ENCODE measurements at regions of chr5 and their contacts with region 1.

Region 1: GRCh38 chr5:177425801-177426565 is 493 bp upstream of the GRK6 start:
- DNase-seq: peak; percentile 89 to 100 (median 100)
- ATAC-seq: peak; percentile 89
- H3K4me3 ChIP-seq: peak overlapping the region; percentile 67
- H3K4me3 Mint-ChIP-seq: peak overlapping the region; percentile 87 to 96 (median 90)
- H3K27ac ChIP-seq: peak overlapping the region; percentile 82
- H3K27ac Mint-ChIP-seq: peak overlapping the region; percentile 92 to 98 (median 96)
- H3K4me1 ChIP-seq: peaks cover 27 to 36% of the 10 kb centered on the region in 2 donors
- H3K4me1 Mint-ChIP-seq: peaks cover 33 to 54% (median 38%) of the 10 kb centered on the region in 7 donors
- H3K27me3 ChIP-seq: no peaks in the 10 kb centered on the region
- H3K27me3 Mint-ChIP-seq: peaks cover 0 to 3% (median 0%) of the 10 kb centered on the region in 5 donors

Region 2: GRCh38 chr5:176965633-176966032 is 460.4 kb before region 1 on chr5:
- CTCF ChIA-PET with region 1: no interaction called
- POLR2A ChIA-PET with region 1: no interaction called
- intact Hi-C with region 1: no loop called
- DNase-seq: no peak
- ATAC-seq: no peak
- H3K4me3 ChIP-seq: no peak overlapping the region
- H3K4me3 Mint-ChIP-seq: no peak overlapping the region
- H3K27ac ChIP-seq: no peak overlapping the region
- H3K27ac Mint-ChIP-seq: peak overlapping the region in 1 of 9 donors; percentile 20
- H3K4me1 ChIP-seq: no peaks in the 10 kb centered on the region
- H3K4me1 Mint-ChIP-seq: peaks cover 0 to 4% (median 1%) of the 10 kb centered on the region in 7 donors
- H3K27me3 ChIP-seq: no peaks in the 10 kb centered on the region
- H3K27me3 Mint-ChIP-seq: no peaks in the 10 kb centered on the region

Region 3: GRCh38 chr5:177311723-177312648 is 114.0 kb before region 1 on chr5 and contains the start of gene MXD3:
- CTCF ChIA-PET with region 1: no interaction called
- POLR2A ChIA-PET with region 1: no interaction called
- intact Hi-C with region 1: loop called in 1 of 2 experiments (anchors 1 kb)
- DNase-seq: peak; percentile 87 to 97 (median 92)
- ATAC-seq: peak; percentile 95
- H3K4me3 ChIP-seq: peak within 1 kb of the TSS; percentile 77
- H3K4me3 Mint-ChIP-seq: peak within 1 kb of the TSS; percentile 78 to 93 (median 84)
- H3K27ac ChIP-seq: peak within 1 kb of the TSS; percentile 51
- H3K27ac Mint-ChIP-seq: peak within 1 kb of the TSS in 6 of 9 donors; percentile 42 to 92 (median 59)
- H3K4me1 ChIP-seq: peaks cover 21 to 22% of the 10 kb centered on the region in 2 donors
- H3K4me1 Mint-ChIP-seq: peaks cover 11 to 49% (median 32%) of the 10 kb centered on the region in 7 donors
- H3K27me3 ChIP-seq: no peaks in the 10 kb centered on the region
- H3K27me3 Mint-ChIP-seq: peaks cover 0 to 5% (median 0%) of the 10 kb centered on the region in 5 donors
- total RNA-seq, gene MXD3: 8.8 to 39.8 (median 18.3) TPM

Region 4: DNA sequence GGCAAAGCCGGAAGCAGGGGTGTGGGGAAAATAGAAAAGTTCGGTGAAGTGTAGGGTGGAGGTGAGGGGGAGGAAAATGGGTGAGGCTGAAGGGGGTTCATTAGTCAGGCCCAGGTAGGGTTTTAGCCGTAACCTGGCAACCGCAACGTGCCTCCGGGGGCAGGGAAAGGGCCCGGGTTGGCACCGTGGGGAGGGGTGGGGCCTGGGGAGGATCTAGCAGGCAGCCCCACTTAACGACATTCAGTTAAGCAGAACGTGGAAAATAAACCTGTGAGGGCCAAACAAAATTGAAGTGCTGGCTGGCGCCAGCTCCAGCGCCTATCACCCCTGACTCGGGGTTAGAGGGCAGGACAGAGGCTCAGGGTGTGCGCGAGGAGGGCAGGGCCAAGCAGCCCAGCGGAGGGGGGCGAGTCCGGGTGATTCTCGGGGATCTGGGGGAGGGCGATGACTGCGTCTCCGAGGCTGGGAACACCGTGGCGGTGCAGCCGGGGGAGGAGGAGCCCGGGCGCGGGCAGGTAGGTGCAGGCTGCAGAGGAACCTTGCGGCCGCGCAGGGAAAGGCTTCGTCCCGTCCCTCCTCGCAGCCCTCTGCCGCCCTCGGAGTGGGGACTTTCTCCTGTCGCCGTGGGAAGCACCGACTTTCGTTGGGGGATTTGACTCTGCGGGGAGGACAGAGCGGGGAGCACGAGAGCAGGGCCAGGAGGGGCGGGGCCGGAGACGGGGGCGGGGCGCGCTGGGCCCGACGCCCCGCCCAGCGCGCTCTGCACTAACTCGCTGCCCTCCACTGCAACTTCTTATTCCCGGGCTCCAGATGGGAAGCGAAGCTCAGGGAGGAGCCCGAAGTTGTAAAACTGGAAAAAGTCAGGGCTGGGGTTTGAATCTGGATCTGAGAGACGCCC is 63.1 kb before region 1 on chr5:
- CTCF ChIA-PET with region 1: no interaction called
- POLR2A ChIA-PET with region 1: interaction called, 3 read pairs
- intact Hi-C with region 1: loop called (anchors 2 kb)
- DNase-seq: peak; percentile 32 to 79 (median 55)
- ATAC-seq: peak; percentile 80
- H3K4me3 ChIP-seq: peak overlapping the region; percentile 61
- H3K4me3 Mint-ChIP-seq: peak overlapping the region; percentile 83 to 97 (median 90)
- H3K27ac ChIP-seq: peak overlapping the region; percentile 88
- H3K27ac Mint-ChIP-seq: peak overlapping the region; percentile 82 to 94 (median 91)
- H3K4me1 ChIP-seq: peaks cover 53 to 61% of the 10 kb centered on the region in 2 donors
- H3K4me1 Mint-ChIP-seq: peaks cover 42 to 78% (median 64%) of the 10 kb centered on the region in 7 donors
- H3K27me3 ChIP-seq: no peaks in the 10 kb centered on the region
- H3K27me3 Mint-ChIP-seq: no peaks in the 10 kb centered on the region

Region 5: DNA sequence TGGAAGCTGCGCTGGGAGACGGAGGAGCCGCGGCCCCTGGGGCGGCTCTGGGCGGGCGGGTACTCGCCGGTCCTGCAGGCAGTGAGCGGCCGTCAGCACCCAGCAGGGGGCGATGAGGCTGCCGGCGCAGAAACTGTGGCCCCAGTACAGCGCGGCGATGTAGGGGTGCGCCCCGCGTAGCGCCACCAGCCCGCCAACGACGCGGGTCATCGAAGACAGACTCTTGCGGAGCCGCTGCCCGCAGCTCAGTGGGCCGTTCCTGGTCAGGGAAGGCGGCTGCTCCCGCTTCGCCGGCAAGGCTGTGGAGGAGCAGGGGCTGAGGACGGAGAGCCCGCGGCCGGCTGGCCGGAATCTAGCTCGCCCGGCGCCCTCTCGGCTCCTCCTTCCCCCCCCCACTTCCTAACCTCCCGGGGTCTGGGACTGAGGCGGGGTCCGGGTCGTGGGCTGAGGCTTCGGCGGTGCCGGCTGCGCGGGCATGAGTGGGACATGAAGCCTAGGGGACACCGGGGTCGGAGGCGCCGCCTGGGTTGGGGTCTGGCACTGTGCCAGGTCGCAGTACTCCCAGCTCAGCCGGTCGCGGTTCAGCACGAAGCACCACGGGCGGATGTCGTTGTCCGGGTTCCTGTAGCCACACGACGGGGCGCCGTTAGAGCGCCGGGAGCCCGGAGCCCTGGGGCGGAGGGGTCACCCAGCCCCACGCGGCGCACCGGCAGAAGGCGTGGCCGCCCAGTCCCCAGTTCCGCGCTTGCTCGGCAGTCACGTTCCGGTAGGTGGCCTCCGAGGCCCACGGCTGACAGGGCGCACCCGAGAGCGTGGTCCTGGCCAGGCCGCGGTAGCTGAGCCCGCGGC is 22.0 kb before region 1 on chr5:
- CTCF ChIA-PET with region 1: interaction called, 116 read pairs
- POLR2A ChIA-PET with region 1: interaction called, 210 read pairs
- intact Hi-C with region 1: loop called (anchors 1 kb)
- DNase-seq: peak; percentile 74 to 86 (median 84)
- ATAC-seq: peak; percentile 87
- H3K4me3 ChIP-seq: peak overlapping the region; percentile 61
- H3K4me3 Mint-ChIP-seq: peak overlapping the region in 9 of 10 donors; percentile 76 to 88 (median 84)
- H3K27ac ChIP-seq: peak overlapping the region; percentile 41
- H3K27ac Mint-ChIP-seq: peak overlapping the region in 1 of 9 donors; percentile 19
- H3K4me1 ChIP-seq: peaks cover 25 to 33% of the 10 kb centered on the region in 2 donors
- H3K4me1 Mint-ChIP-seq: peaks cover 7 to 35% (median 23%) of the 10 kb centered on the region in 7 donors
- H3K27me3 ChIP-seq: no peaks in the 10 kb centered on the region
- H3K27me3 Mint-ChIP-seq: peaks cover 0 to 54% (median 0%) of the 10 kb centered on the region in 5 donors

Region 6: DNA sequence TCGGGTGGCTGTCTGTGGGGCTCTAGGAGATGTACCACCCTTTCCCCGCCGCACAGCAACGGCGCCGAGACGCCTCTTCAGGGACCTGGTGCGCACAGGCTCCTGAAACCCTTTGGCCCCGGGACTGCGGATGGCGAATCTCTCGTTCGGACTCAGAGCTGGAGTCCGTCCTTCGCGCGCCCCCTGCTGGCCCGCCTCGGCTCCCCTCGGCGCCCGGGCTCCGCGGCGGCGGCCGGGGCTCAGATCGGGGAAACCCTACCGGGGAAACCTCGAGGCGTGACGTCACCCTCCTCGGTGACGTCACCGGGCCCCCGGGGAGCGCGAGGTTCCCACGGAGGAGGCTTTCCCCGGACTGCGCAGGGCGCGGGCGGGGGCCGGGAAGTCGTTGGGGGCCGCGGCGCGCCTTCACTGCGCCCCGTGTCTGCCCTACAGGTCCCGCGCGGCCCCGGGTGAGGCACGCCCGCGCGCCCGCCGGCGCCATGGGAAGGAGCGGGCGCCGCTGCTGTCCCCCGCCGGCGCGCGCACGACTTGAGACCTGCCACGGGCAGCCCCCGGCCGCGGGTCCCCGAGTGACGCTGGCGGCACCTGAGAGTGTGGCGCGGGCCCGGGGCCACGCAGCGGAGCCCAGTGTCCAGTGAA is 28.5 kb after region 1 on chr5:
- CTCF ChIA-PET with region 1: interaction called, 91 read pairs
- POLR2A ChIA-PET with region 1: interaction called, 804 read pairs
- intact Hi-C with region 1: loop called (anchors 1 kb)
- DNase-seq: peak; percentile 83 to 98 (median 88)
- ATAC-seq: peak; percentile 68
- H3K4me3 ChIP-seq: peak overlapping the region; percentile 70
- H3K4me3 Mint-ChIP-seq: peak overlapping the region; percentile 66 to 92 (median 85)
- H3K27ac ChIP-seq: peak overlapping the region; percentile 97
- H3K27ac Mint-ChIP-seq: peak overlapping the region in 7 of 9 donors; percentile 51 to 95 (median 90)
- H3K4me1 ChIP-seq: peaks cover 12% of the 10 kb centered on the region in 2 donors
- H3K4me1 Mint-ChIP-seq: peaks cover 10 to 27% (median 17%) of the 10 kb centered on the region in 7 donors
- H3K27me3 ChIP-seq: no peaks in the 10 kb centered on the region
- H3K27me3 Mint-ChIP-seq: peaks cover 0 to 22% (median 0%) of the 10 kb centered on the region in 5 donors

Region 7: GRCh38 chr5:177542816-177543465 is 117.0 kb after region 1 on chr5:
- CTCF ChIA-PET with region 1: no interaction called
- POLR2A ChIA-PET with region 1: no interaction called
- intact Hi-C with region 1: no loop called
- DNase-seq: no peak
- ATAC-seq: no peak
- H3K4me3 ChIP-seq: no peak overlapping the region
- H3K4me3 Mint-ChIP-seq: no peak overlapping the region
- H3K27ac ChIP-seq: no peak overlapping the region
- H3K27ac Mint-ChIP-seq: peak overlapping the region in 2 of 9 donors; percentile 37 to 71
- H3K4me1 ChIP-seq: no peaks in the 10 kb centered on the region
- H3K4me1 Mint-ChIP-seq: peaks cover 12 to 50% (median 36%) of the 10 kb centered on the region in 7 donors
- H3K27me3 ChIP-seq: no peaks in the 10 kb centered on the region
- H3K27me3 Mint-ChIP-seq: no peaks in the 10 kb centered on the region

Region 8: GRCh38 chr5:177554474-177555111 is 128.6 kb after region 1 on chr5 and contains the start of gene FAM193B:
- CTCF ChIA-PET with region 1: no interaction called
- POLR2A ChIA-PET with region 1: no interaction called
- intact Hi-C with region 1: loop called (anchors 1 kb)
- DNase-seq: peak; percentile 93 to 96 (median 95)
- ATAC-seq: peak; percentile 99
- H3K4me3 ChIP-seq: peak within 1 kb of the TSS; percentile 68
- H3K4me3 Mint-ChIP-seq: peak within 1 kb of the TSS; percentile 81 to 92 (median 88)
- H3K27ac ChIP-seq: peak within 1 kb of the TSS; percentile 73
- H3K27ac Mint-ChIP-seq: peak within 1 kb of the TSS; percentile 63 to 90 (median 85)
- H3K4me1 ChIP-seq: peaks cover 10 to 17% of the 10 kb centered on the region in 2 donors
- H3K4me1 Mint-ChIP-seq: peaks cover 24 to 43% (median 35%) of the 10 kb centered on the region in 7 donors
- H3K27me3 ChIP-seq: no peaks in the 10 kb centered on the region
- H3K27me3 Mint-ChIP-seq: peaks cover 0 to 4% (median 0%) of the 10 kb centered on the region in 5 donors
- total RNA-seq, gene FAM193B: 102 to 275 (median 175) TPM